AG04449 (cell line): ENCODE measurements at regions of chr2 and their contacts with region 1.

Region 1: DNA sequence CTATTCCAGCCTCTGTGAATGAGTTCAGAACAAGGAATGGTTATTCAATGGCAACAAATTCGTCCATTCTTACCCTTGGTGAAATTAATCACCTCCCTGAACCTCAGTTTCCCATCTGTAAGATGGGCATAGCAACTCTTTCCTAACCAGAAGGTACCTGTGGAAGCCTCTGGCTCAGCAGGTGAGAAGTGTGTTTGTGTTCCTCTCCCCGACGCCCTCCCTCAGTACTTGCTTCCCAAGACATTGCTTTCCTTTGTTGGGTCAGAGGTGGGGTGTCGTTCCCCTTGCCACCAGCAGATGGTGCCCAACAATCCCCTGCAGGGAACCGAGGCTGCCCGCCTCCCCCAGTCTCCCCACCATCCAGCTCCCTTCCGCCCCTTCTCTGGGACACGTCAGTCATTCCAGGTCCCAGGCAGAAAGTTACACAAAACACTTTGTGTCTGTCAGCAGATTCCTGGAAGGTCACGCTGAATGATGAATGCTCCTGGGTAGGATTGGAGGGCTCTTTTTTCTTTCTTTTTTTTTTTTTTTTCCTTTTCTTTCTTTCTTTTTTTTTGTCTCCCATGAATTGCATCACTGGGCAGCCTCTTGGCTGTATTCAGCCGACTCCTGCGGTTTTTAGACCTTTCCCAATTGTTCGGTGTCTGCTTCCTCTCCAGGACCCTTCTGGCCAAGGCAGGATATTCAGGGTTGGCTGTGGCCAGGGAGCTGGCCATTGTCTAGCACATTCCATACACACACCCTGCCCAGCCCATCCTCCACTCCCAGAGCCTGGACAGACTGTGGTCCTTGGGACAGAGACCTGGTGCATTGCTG is 117.3 kb downstream of the LPIN1 start:
- DNase-seq: peak; percentile 37
- H3K4me3 ChIP-seq: no peak overlapping the region; the same call in none of the 2 replicates
- CTCF ChIP-seq: peak; percentile 99

Region 2: DNA sequence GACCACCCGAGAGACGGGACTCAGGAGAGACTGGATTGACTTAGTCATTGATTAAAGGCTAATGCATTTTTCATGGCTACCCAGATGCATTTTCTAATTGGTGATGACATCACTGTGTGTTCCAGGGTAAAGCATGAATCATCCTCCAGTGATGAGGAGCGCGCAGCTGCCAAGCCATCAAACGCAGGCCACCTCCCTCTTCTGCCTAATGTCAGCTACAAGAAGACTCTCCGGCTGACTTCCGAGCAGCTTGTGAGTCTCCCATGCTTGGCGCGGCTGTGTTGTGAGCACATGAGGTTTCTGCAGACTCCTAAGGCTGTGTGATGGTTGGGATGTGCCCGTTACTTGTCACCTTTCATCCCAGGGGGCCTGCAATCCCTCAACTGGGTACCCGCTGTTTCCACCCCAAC is 60.9 kb before region 1 on chr2:
- CTCF ChIA-PET with region 1: no interaction called
- POLR2A ChIA-PET with region 1: no interaction called
- DNase-seq: no peak
- H3K4me3 ChIP-seq: no peak overlapping the region
- CTCF ChIP-seq: no peak

Region 3: GRCh38 chr2:11850082-11850481 is 13.6 kb before region 1 on chr2:
- CTCF ChIA-PET with region 1: interaction called, 23 read pairs
- POLR2A ChIA-PET with region 1: no interaction called
- DNase-seq: no peak
- H3K4me3 ChIP-seq: no peak overlapping the region
- CTCF ChIP-seq: no peak